ENCODE measurements at regions of chr5 and their contacts with region 1.

Region 1: DNA sequence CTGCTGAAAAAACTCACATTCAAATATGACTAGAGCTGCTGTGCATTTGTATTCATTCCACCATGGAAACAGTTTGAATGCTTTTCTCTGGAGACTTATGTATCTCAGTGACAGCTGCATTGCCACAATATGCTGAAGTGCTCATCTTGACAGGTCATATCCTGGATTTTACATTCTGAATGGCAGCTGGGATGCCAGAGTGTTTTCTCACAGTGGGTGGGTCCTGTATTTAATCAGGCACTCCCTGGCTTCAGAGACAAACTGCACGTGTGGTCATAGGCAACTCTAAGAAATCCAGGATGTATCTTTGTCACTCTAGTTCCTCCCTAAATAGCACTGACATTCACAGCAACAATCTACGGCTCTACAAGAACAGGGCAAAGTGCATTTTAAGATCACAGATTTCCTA is 75.6 kb downstream of the ST8SIA4 start:
- DNase-seq: no peak
- ATAC-seq: peak; percentile 29
- H3K4me3 ChIP-seq: peak overlapping the region; percentile 44; the same call in 1 of the 2 replicates
- H3K27ac ChIP-seq: peak overlapping the region; percentile 95
- H3K4me1 ChIP-seq: peaks cover 32% of the 10 kb centered on the region
- H3K27me3 ChIP-seq: no peaks in the 10 kb centered on the region
- CTCF ChIP-seq: no peak
- EP300 ChIP-seq: no peak
- POLR2A ChIP-seq: no peak
- RAD21 ChIP-seq: no peak

Region 2: DNA sequence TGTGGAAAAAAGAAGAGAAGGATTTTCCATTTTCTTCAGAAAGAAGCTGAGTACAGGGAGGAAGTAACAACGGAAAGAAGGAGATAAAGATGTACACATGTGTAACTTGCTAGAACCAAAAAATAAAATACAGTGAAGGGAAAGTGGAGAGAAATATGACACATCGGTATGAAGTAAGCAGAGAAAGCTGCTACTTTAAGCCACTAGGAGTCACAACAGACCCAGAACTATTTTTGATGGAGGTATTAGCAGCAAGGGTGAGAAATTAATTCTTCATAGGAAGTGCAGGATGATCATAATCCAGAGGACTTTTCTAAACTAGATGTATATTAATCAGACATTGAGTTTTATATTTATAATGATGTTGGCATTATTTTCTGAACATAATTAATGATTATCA is 203.8 kb before region 1 on chr5:
- CTCF ChIA-PET with region 1: no interaction called
- POLR2A ChIA-PET with region 1: no interaction called
- RAD21 ChIA-PET with region 1: no interaction called
- SMC1A ChIA-PET with region 1: interaction called, 3 read pairs
- in situ Hi-C with region 1: no loop called
- intact Hi-C with region 1: loop called (anchors 5 kb)
- DNase-seq: no peak
- ATAC-seq: peak; percentile 96
- H3K4me3 ChIP-seq: no peak overlapping the region
- H3K27ac ChIP-seq: no peak overlapping the region
- H3K4me1 ChIP-seq: no peaks in the 10 kb centered on the region
- H3K27me3 ChIP-seq: no peaks in the 10 kb centered on the region
- CTCF ChIP-seq: peak; percentile 62 to 67 (median 62)
- EP300 ChIP-seq: no peak
- POLR2A ChIP-seq: no peak
- RAD21 ChIP-seq: peak; percentile 92

Region 3: GRCh38 chr5:100731768-100732167 is 95.7 kb before region 1 on chr5:
- CTCF ChIA-PET with region 1: no interaction called
- POLR2A ChIA-PET with region 1: no interaction called
- RAD21 ChIA-PET with region 1: no interaction called
- SMC1A ChIA-PET with region 1: interaction called, 4 read pairs
- in situ Hi-C with region 1: no loop called
- intact Hi-C with region 1: loop called (anchors 5 kb)
- DNase-seq: peak; percentile 52
- ATAC-seq: peak; percentile 95
- H3K4me3 ChIP-seq: peak overlapping the region; percentile 49
- H3K27ac ChIP-seq: peak overlapping the region; percentile 41; the same call in 1 of the 2 replicates
- H3K4me1 ChIP-seq: peaks cover 3% of the 10 kb centered on the region; the same call in 1 of the 2 replicates
- H3K27me3 ChIP-seq: no peaks in the 10 kb centered on the region
- CTCF ChIP-seq: no peak
- EP300 ChIP-seq: no peak
- POLR2A ChIP-seq: no peak
- RAD21 ChIP-seq: no peak

Region 4: GRCh38 chr5:100790170-100790665 is 37.3 kb before region 1 on chr5:
- CTCF ChIA-PET with region 1: interaction called, 11 read pairs
- POLR2A ChIA-PET with region 1: interaction called, 12 read pairs
- RAD21 ChIA-PET with region 1: interaction called, 15 read pairs
- SMC1A ChIA-PET with region 1: interaction called, 13 read pairs
- in situ Hi-C with region 1: no loop called
- intact Hi-C with region 1: no loop called
- DNase-seq: no peak
- ATAC-seq: peak; percentile 80
- H3K4me3 ChIP-seq: no peak overlapping the region
- H3K27ac ChIP-seq: no peak overlapping the region
- H3K4me1 ChIP-seq: peaks cover 12% of the 10 kb centered on the region
- H3K27me3 ChIP-seq: no peaks in the 10 kb centered on the region
- CTCF ChIP-seq: peak in 1 of 3 experiments; percentile 31; a peak in 2 of 6 replicates
- EP300 ChIP-seq: no peak
- POLR2A ChIP-seq: no peak
- RAD21 ChIP-seq: no peak

Region 5: GRCh38 chr5:100852988-100853449 is 25.5 kb after region 1 on chr5:
- CTCF ChIA-PET with region 1: interaction called, 4 read pairs
- POLR2A ChIA-PET with region 1: interaction called, 3 read pairs
- RAD21 ChIA-PET with region 1: interaction called, 29 read pairs
- SMC1A ChIA-PET with region 1: interaction called, 47 read pairs
- in situ Hi-C with region 1: no loop called
- intact Hi-C with region 1: loop called (anchors 1 kb)
- DNase-seq: peak; percentile 89
- ATAC-seq: peak; percentile 89
- H3K4me3 ChIP-seq: peak overlapping the region; percentile 21; the same call in 1 of the 2 replicates
- H3K27ac ChIP-seq: peak overlapping the region; percentile 94
- H3K4me1 ChIP-seq: peaks cover 38% of the 10 kb centered on the region
- H3K27me3 ChIP-seq: no peaks in the 10 kb centered on the region
- CTCF ChIP-seq: no peak
- EP300 ChIP-seq: peak; percentile 95 to 96
- POLR2A ChIP-seq: no peak
- RAD21 ChIP-seq: peak; percentile 20; the same call in 1 of the 2 replicates

Region 6: DNA sequence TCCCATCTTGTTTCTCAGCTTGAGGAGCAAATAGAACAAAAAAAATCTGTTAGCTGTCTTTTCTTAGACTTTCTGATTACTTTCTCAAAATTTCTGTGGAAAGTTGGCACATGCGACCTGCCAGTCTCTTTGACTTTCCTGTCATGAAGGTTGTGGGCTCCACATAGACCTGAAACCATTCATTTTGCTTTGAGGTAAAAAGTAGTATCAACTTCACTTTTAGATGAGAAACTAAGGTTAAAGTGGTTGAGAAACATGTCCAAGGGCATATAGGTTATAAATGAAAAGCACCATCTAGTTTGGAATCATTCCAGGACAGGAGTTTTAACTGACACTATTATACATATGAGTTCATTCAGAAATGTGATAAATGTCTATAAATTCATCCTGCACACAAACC is 32.9 kb after region 1 on chr5:
- CTCF ChIA-PET with region 1: interaction called, 3 read pairs
- POLR2A ChIA-PET with region 1: interaction called, 3 read pairs
- RAD21 ChIA-PET with region 1: interaction called, 29 read pairs
- SMC1A ChIA-PET with region 1: interaction called, 47 read pairs
- in situ Hi-C with region 1: no loop called
- intact Hi-C with region 1: no loop called
- DNase-seq: no peak
- ATAC-seq: peak; percentile 63
- H3K4me3 ChIP-seq: no peak overlapping the region
- H3K27ac ChIP-seq: peak overlapping the region; percentile 20
- H3K4me1 ChIP-seq: peaks cover 28% of the 10 kb centered on the region
- H3K27me3 ChIP-seq: no peaks in the 10 kb centered on the region
- CTCF ChIP-seq: no peak
- EP300 ChIP-seq: 0 out of 4 replicates have a peak, but pooled peaks of 1 of the 2 experiments have one; percentile 23
- POLR2A ChIP-seq: no peak
- RAD21 ChIP-seq: no peak

Region 7: GRCh38 chr5:100890461-100891008 is 63.0 kb after region 1 on chr5:
- CTCF ChIA-PET with region 1: interaction called, 3 read pairs
- POLR2A ChIA-PET with region 1: interaction called, 6 read pairs
- RAD21 ChIA-PET with region 1: interaction called, 86 read pairs
- SMC1A ChIA-PET with region 1: interaction called, 8 read pairs
- in situ Hi-C with region 1: no loop called
- intact Hi-C with region 1: loop called (anchors 2 kb)
- DNase-seq: peak; percentile 64
- ATAC-seq: peak; percentile 73
- H3K4me3 ChIP-seq: peak overlapping the region; percentile 58
- H3K27ac ChIP-seq: peak overlapping the region; percentile 87
- H3K4me1 ChIP-seq: peaks cover 15% of the 10 kb centered on the region; the same call in 1 of the 2 replicates
- H3K27me3 ChIP-seq: no peaks in the 10 kb centered on the region
- CTCF ChIP-seq: no peak
- EP300 ChIP-seq: peak; percentile 46 to 57; a peak in 2 of 4 replicates
- POLR2A ChIP-seq: no peak
- RAD21 ChIP-seq: 0 out of 2 replicates have a peak, but pooled peaks have one; percentile 2

Region 8: DNA sequence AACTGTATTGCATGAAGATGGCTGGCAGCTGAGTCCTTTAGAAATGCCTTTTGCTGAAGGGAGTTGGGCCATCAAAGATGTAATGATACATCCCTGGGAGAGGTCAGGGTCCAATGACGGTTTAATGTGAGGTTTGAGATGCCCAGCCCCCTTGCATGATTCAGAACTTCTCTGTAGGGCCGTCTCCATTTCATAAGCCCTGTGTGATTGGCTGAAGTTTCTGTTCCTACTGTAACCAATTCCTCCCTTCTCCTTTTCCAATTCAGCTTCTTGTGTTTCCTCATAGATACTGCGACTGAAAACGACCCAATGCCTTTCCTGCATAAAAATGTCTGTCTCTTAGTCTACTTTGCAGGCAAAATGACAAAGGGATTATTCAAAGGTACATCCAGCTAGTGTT is 123.5 kb after region 1 on chr5:
- CTCF ChIA-PET with region 1: no interaction called
- POLR2A ChIA-PET with region 1: no interaction called
- RAD21 ChIA-PET with region 1: no interaction called
- SMC1A ChIA-PET with region 1: no interaction called
- in situ Hi-C with region 1: no loop called
- intact Hi-C with region 1: no loop called
- DNase-seq: no peak
- ATAC-seq: no peak
- H3K4me3 ChIP-seq: no peak overlapping the region
- H3K27ac ChIP-seq: no peak overlapping the region
- H3K4me1 ChIP-seq: no peaks in the 10 kb centered on the region
- H3K27me3 ChIP-seq: no peaks in the 10 kb centered on the region
- CTCF ChIP-seq: no peak
- EP300 ChIP-seq: no peak
- POLR2A ChIP-seq: no peak
- RAD21 ChIP-seq: no peak

Measured in GM12878 (cell line).